Mucosa of descending colon (tissue), 3 donors: ENCODE measurements at regions of chr1 and their contacts with region 1.

Region 1: GRCh38 chr1:160830321-160831153 is 32.1 kb downstream of the CD244 start:
- DNase-seq: peak; percentile 72 to 90 (median 85)
- ATAC-seq: peak; percentile 78
- H3K4me3 ChIP-seq: no peak overlapping the region
- H3K4me1 ChIP-seq: no peaks in the 10 kb centered on the region
- CTCF ChIP-seq: peak; percentile 35

Region 2: GRCh38 chr1:160702100-160702499 is 128.4 kb before region 1 on chr1:
- intact Hi-C with region 1: no loop called
- DNase-seq: no peak
- ATAC-seq: no peak
- H3K4me3 ChIP-seq: no peak overlapping the region
- H3K4me1 ChIP-seq: no peaks in the 10 kb centered on the region
- CTCF ChIP-seq: no peak

Region 3: GRCh38 chr1:160781914-160782689 is 48.4 kb before region 1 on chr1:
- intact Hi-C with region 1: no loop called
- DNase-seq: peak in 1 of 3 donors; percentile 37
- ATAC-seq: peak; percentile 72
- H3K4me3 ChIP-seq: no peak overlapping the region
- H3K4me1 ChIP-seq: peaks cover 21% of the 10 kb centered on the region
- CTCF ChIP-seq: no peak

Region 4: DNA sequence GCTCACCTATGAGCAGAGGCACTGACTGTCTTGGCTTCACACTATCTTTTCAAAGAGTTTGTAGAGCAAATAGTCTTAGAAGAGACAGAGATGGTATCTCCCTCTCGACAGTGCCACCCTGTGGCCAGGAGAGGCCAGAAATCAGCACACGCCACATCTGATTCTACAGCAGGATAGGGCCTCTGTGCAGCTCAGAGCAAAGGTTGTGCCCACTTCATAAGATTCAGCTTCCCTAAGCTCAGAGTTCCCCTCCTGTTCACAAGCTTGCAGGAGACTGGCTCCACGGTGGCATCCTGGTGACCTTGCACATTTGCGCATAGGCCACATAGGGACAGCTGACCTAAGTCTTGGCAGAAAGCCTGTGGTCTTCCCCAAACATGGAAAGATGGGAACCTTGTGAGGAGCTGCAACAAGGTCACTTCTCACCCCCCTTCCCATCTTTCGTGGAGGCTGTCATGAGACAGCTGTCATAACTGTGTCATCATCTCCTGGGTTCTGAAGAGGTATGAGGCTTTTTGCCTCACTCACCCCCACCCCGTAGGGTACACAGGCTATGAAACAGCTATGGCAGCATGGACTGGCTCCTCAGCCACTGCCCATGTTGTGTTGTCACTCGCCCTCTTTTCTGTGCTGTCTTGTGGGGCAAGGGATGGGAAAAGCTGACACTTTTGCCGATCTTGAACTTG is 121.0 kb after region 1 on chr1:
- intact Hi-C with region 1: loop called in 1 of 2 experiments (anchors 5 kb)
- DNase-seq: peak in 2 of 3 donors; percentile 81 to 92
- ATAC-seq: peak; percentile 91
- H3K4me3 ChIP-seq: no peak overlapping the region
- H3K4me1 ChIP-seq: no peaks in the 10 kb centered on the region
- CTCF ChIP-seq: peak; percentile 42